ENCODE measurements at regions of chr4 and their contacts with region 1.

Region 1: GRCh38 chr4:183098723-183099536 is at the start of gene WWC2:
- DNase-seq: peak; percentile 40 to 68 (median 62)
- ATAC-seq: peak; percentile 85
- H3K4me3 ChIP-seq: peak within 1 kb of the TSS; percentile 75
- H3K4me3 Mint-ChIP-seq: peak within 1 kb of the TSS; percentile 51 to 87 (median 83)
- H3K27ac ChIP-seq: peak within 1 kb of the TSS; percentile 48
- H3K27ac Mint-ChIP-seq: peak within 1 kb of the TSS in 3 of 9 donors; percentile 56 to 72 (median 68)
- H3K4me1 ChIP-seq: peaks cover 0 to 4% of the 10 kb centered on the region in 2 donors
- H3K4me1 Mint-ChIP-seq: peaks cover 3 to 53% (median 34%) of the 10 kb centered on the region in 7 donors
- H3K27me3 ChIP-seq: peaks cover 0 to 2% of the 10 kb centered on the region in 2 donors
- H3K27me3 Mint-ChIP-seq: peaks cover 0 to 61% (median 0%) of the 10 kb centered on the region in 5 donors
- total RNA-seq, gene WWC2: 0.07 to 13.8 (median 10.9) TPM

Region 2: DNA sequence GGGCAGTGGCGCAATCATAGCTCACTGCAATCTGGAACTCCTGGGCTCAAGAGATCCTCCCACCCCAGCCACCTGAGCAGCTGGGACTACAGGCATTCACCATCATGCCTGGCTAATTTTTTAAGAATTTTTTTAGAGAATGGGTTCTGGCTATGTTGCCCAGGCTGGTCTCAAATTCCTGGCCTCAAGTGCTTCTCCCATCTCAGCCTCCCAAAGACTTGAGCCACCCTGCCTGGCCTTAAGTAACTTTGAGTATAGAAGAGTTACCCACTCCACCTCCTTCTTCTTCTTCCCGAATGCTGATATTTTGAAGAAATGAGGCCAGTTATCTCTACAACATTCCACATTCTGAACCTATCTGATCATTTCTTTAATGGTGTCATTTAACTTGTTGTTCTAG is 72.2 kb before region 1 on chr4:
- CTCF ChIA-PET with region 1: no interaction called
- POLR2A ChIA-PET with region 1: no interaction called
- intact Hi-C with region 1: no loop called
- DNase-seq: no peak
- ATAC-seq: no peak
- H3K4me3 ChIP-seq: no peak overlapping the region
- H3K4me3 Mint-ChIP-seq: no peak overlapping the region
- H3K27ac ChIP-seq: no peak overlapping the region
- H3K27ac Mint-ChIP-seq: no peak overlapping the region
- H3K4me1 ChIP-seq: no peaks in the 10 kb centered on the region
- H3K4me1 Mint-ChIP-seq: no peaks in the 10 kb centered on the region
- H3K27me3 ChIP-seq: no peaks in the 10 kb centered on the region
- H3K27me3 Mint-ChIP-seq: peaks cover 4 to 15% (median 5%) of the 10 kb centered on the region in 5 donors

Region 3: DNA sequence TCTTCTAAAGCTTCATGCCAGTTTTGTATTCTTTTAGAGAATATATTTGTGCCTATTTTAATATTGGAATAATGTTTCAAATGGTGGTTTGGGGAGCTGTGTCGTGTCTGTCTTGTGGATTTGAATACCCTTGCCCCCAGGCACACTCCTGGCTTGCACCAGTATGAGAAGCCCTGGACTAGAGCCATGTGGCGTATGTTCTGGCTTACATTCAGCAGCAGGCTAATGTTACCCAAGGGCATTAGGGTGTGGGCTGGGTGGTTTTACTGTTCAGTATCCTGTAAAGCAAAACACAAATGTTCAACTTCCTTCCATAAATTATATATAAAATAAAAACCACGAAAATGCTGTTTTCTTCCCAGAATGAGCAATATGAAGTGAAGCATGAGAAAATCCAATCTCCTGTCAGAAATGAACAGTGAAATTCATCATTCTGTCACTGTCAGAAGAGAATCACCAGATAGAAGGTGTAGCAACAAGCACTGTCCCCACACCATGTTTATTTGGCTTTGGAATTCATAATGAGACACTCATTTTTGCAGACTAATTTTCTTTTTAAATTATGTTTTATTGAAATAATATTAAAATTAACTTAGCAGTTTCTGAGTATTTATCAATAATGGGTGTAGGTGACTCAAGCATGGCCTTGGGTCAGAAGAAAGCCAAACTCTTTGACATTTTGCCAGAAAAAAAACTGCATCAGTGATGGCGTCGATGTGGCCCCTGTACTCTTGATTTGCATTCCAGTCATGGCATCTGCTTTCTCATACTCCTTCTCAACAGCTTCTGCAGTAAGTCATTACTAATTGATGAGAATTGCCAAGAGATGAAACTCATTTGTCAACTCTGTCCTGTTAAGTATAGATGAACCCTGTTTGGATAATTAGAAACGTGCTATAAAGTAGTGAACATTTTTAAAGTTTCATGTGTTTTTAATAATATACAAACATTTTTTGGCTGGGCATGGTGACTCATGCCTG is 43.9 kb after region 1 on chr4:
- CTCF ChIA-PET with region 1: no interaction called
- POLR2A ChIA-PET with region 1: no interaction called
- intact Hi-C with region 1: loop called in 1 of 2 experiments (anchors 5 kb)
- DNase-seq: no peak
- ATAC-seq: no peak
- H3K4me3 ChIP-seq: no peak overlapping the region
- H3K4me3 Mint-ChIP-seq: no peak overlapping the region
- H3K27ac ChIP-seq: no peak overlapping the region
- H3K27ac Mint-ChIP-seq: no peak overlapping the region
- H3K4me1 ChIP-seq: no peaks in the 10 kb centered on the region
- H3K4me1 Mint-ChIP-seq: peaks cover 0 to 31% (median 13%) of the 10 kb centered on the region in 7 donors
- H3K27me3 ChIP-seq: no peaks in the 10 kb centered on the region
- H3K27me3 Mint-ChIP-seq: peaks cover 0 to 12% (median 0%) of the 10 kb centered on the region in 5 donors

Region 4: GRCh38 chr4:183407128-183407585 is 308.2 kb after region 1 on chr4:
- CTCF ChIA-PET with region 1: no interaction called
- POLR2A ChIA-PET with region 1: no interaction called
- intact Hi-C with region 1: loop called in 1 of 2 experiments (anchors 10 kb)
- DNase-seq: peak; percentile 83 to 96 (median 90)
- ATAC-seq: peak; percentile 99
- H3K4me3 ChIP-seq: peak overlapping the region; percentile 78
- H3K4me3 Mint-ChIP-seq: peak overlapping the region; percentile 60 to 88 (median 85)
- H3K27ac ChIP-seq: peak overlapping the region; percentile 72
- H3K27ac Mint-ChIP-seq: peak overlapping the region; percentile 80 to 95 (median 87)
- H3K4me1 ChIP-seq: no peaks in the 10 kb centered on the region
- H3K4me1 Mint-ChIP-seq: peaks cover 5 to 30% (median 17%) of the 10 kb centered on the region in 7 donors
- H3K27me3 ChIP-seq: no peaks in the 10 kb centered on the region
- H3K27me3 Mint-ChIP-seq: peaks cover 0 to 11% (median 0%) of the 10 kb centered on the region in 5 donors

Region 5: GRCh38 chr4:183659029-183659871 is 560.3 kb after region 1 on chr4 and contains the starts of genes RWDD4 and TRAPPC11:
- CTCF ChIA-PET with region 1: no interaction called
- POLR2A ChIA-PET with region 1: no interaction called
- intact Hi-C with region 1: loop called in 1 of 2 experiments (anchors 5 kb)
- DNase-seq: peak; percentile 83 to 97 (median 95)
- ATAC-seq: peak; percentile 99
- H3K4me3 ChIP-seq: peak within 1 kb of the TSS; percentile 87
- H3K4me3 Mint-ChIP-seq: peak within 1 kb of the TSS; percentile 91 to 98 (median 96)
- H3K27ac ChIP-seq: peak within 1 kb of the TSS; percentile 96
- H3K27ac Mint-ChIP-seq: peak within 1 kb of the TSS; percentile 90 to 99 (median 95)
- H3K4me1 ChIP-seq: peaks cover 14 to 19% of the 10 kb centered on the region in 2 donors
- H3K4me1 Mint-ChIP-seq: peaks cover 35 to 48% (median 38%) of the 10 kb centered on the region in 7 donors
- H3K27me3 ChIP-seq: no peaks in the 10 kb centered on the region
- H3K27me3 Mint-ChIP-seq: no peaks in the 10 kb centered on the region
- total RNA-seq, gene RWDD4: 9.3 to 15.8 (median 11.6) TPM
- total RNA-seq, gene TRAPPC11: 26.3 to 48.8 (median 35.6) TPM